ENCODE measurements at regions of chr5 and their contacts with region 1.

Region 1: GRCh38 chr5:147558826-147559225 is 49.0 kb upstream of the DPYSL3 start:
- DNase-seq: peak; percentile 86
- H3K4me3 ChIP-seq: no peak overlapping the region
- H3K27ac ChIP-seq: no peak overlapping the region
- H3K4me1 ChIP-seq: peaks cover 3% of the 10 kb centered on the region
- H3K27me3 ChIP-seq: peaks cover 0 to 1% of the 10 kb centered on the region in 2 experiments
- CTCF ChIP-seq: peak; percentile 74 to 85
- POLR2A ChIP-seq: no peak

Region 2: DNA sequence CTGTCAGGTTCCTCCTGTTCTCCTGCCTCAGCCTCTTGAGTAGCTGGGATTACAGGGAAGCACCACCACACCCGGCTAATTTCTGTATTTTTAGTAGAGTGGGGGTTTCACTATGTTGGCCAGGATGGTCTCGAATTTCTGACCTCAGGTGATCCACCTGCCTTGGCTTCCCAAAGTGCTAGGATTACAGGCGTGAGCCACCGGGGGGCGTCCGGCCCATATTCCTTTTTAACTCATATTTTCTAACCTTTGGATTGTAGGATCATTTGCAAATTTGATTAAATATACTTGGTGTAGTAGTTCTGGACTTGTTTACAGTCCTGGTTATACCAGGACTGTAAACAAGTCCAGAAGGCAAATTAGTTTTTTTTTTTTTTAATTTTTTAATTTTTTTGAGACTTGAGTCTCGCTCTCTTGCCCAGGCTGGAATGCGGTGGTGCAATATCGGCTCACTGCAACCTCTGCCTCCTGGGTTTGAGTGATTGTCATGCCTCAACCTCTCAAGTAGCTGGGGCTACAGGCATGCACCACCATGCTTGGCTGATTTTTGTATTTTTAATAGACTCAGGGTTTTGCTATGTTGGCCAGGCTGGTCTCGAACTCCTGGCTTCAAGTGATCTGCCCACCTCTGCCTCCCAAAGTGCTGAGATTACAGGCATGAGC is 1107.3 kb before region 1 on chr5:
- CTCF ChIA-PET with region 1: no interaction called
- POLR2A ChIA-PET with region 1: no interaction called
- dilution Hi-C with region 1: no loop called
- intact Hi-C with region 1: no loop called
- DNase-seq: no peak
- H3K4me3 ChIP-seq: no peak overlapping the region
- H3K27ac ChIP-seq: no peak overlapping the region
- H3K4me1 ChIP-seq: peaks cover 16% of the 10 kb centered on the region
- H3K27me3 ChIP-seq: no peaks in the 10 kb centered on the region
- CTCF ChIP-seq: peak; percentile 12 to 23
- POLR2A ChIP-seq: no peak

Region 3: DNA sequence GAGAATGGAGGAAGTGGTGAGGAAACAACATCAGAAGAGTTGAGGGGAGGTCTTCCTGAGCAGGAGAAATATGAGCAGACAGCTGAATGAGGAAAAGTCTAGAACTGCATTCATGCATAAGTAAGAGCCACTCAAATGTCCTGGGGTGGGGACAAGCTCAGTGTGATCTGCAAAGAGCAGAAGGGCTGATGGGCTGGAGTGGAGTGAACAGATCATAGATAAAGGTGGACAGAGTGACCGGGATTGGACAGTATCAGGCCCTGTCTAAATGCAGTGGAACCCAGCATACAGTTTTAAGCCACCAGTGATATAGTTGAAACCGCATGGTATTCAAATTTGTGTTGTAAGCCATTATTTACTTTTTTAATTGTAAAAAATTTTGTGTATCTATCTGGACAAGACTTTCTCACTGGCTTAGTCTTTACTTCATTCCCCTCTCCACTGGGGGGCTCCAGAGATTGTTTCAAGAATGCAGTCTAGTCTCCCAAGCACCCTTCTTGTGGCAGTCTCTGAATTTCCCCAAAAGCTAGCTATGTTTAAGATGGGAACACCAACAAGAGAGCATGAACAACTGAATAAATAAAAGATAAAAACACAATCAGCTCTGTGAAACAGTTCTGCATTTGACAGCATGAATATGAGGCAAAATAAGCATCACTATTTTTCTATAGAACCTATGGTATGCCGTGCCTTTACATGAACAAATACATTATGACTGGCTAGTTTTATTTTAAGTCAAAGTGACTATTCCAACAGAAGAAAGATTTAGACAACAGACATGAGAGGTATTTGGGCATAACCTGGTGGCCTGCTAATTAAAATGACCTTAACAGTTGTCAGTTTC is 334.7 kb before region 1 on chr5:
- CTCF ChIA-PET with region 1: interaction called, 18 read pairs
- POLR2A ChIA-PET with region 1: no interaction called
- dilution Hi-C with region 1: no loop called
- intact Hi-C with region 1: loop called (anchors 1 kb)
- DNase-seq: peak; percentile 60
- H3K4me3 ChIP-seq: no peak overlapping the region
- H3K27ac ChIP-seq: no peak overlapping the region
- H3K4me1 ChIP-seq: no peaks in the 10 kb centered on the region
- H3K27me3 ChIP-seq: peaks cover 4% of the 10 kb centered on the region in 2 experiments
- CTCF ChIP-seq: peak; percentile 44 to 64
- POLR2A ChIP-seq: no peak

Region 4: DNA sequence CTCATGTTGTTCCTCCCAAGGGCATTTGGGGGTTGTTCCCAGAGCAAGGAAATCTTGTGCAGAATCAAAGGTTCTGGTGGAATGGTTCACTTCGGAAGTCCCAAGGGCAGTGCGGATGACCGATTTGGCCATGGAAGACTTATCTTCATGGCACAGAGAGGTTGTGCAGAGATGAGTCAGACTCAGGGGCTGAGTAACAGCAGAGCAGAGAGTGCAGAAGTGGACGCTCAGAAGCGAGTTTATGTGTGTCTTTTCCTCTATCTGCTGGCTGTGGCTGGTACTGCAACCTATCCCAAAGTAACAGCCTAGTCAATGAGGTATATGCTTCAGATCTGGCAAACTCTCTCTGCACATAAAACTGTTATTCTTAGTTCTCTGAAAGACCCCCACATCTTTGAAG is 167.0 kb before region 1 on chr5:
- CTCF ChIA-PET with region 1: interaction called, 21 read pairs
- POLR2A ChIA-PET with region 1: no interaction called
- dilution Hi-C with region 1: no loop called
- intact Hi-C with region 1: loop called (anchors 1 kb)
- DNase-seq: peak; percentile 80
- H3K4me3 ChIP-seq: no peak overlapping the region
- H3K27ac ChIP-seq: no peak overlapping the region
- H3K4me1 ChIP-seq: peaks cover 12% of the 10 kb centered on the region
- H3K27me3 ChIP-seq: no peaks in the 10 kb centered on the region
- CTCF ChIP-seq: peak; percentile 63 to 73
- POLR2A ChIP-seq: no peak

Region 5: GRCh38 chr5:147448766-147449165 is 110.1 kb before region 1 on chr5:
- CTCF ChIA-PET with region 1: interaction called, 136 read pairs
- POLR2A ChIA-PET with region 1: interaction called, 3 read pairs
- dilution Hi-C with region 1: no loop called
- intact Hi-C with region 1: no loop called
- DNase-seq: no peak
- H3K4me3 ChIP-seq: no peak overlapping the region
- H3K27ac ChIP-seq: no peak overlapping the region
- H3K4me1 ChIP-seq: no peaks in the 10 kb centered on the region
- H3K27me3 ChIP-seq: no peaks in the 10 kb centered on the region
- CTCF ChIP-seq: no peak
- POLR2A ChIP-seq: no peak

Region 6: GRCh38 chr5:147464211-147464610 is 94.6 kb before region 1 on chr5:
- CTCF ChIA-PET with region 1: interaction called, 131 read pairs
- POLR2A ChIA-PET with region 1: no interaction called
- dilution Hi-C with region 1: no loop called
- intact Hi-C with region 1: loop called (anchors 1 kb)
- DNase-seq: peak; percentile 81
- H3K4me3 ChIP-seq: no peak overlapping the region
- H3K27ac ChIP-seq: no peak overlapping the region
- H3K4me1 ChIP-seq: peaks cover 10% of the 10 kb centered on the region
- H3K27me3 ChIP-seq: no peaks in the 10 kb centered on the region
- CTCF ChIP-seq: peak; percentile 55 to 61
- POLR2A ChIP-seq: no peak

Region 7: DNA sequence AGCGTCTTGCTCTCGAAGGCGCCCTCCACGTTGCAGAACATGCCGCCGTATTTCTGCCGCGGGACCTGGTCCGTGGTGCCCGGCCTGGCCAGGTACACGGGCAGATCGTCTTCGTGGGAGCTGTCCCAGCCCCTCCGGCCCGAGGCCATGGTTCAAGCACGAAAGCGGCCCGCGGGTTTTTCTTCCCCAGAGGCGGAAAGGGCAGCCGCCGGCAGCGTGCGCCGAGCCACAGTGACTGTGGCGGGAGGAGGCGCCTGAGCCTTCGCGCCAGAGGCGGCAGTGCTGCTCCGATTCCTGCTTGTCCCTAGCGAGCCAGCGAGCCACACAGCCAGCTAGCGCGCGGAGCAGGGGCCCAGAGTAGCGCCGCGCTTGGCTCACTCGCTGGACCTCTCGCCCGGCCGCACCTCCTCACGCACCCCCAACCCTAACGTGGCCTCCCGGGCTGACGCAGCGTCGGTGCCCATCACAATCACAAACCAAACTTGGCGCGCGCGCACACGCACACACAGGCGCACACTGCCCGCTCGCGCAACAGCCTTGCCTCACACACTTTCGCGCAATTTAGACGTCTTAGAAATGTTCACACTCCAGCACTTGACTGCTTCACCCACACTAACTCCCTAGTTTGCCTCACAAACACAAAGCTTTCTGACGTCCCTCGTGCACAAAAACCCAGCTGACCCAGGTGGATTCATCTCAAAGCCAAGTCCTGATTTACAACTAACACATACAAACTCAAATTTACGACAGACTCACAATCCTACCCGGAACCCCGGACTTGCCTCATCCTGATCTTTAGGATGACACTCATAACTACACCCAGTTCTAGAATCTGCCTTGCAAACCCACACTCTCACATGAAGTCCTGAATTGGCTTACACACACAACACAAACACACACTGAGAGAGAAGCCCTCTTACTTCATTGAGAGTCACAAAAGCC is 48.8 kb before region 1 on chr5 and contains the start of gene DPYSL3:
- CTCF ChIA-PET with region 1: interaction called, 39 read pairs
- POLR2A ChIA-PET with region 1: no interaction called
- dilution Hi-C with region 1: no loop called
- intact Hi-C with region 1: loop called (anchors 1 kb)
- DNase-seq: peak; percentile 90
- H3K4me3 ChIP-seq: peak within 1 kb of the TSS; percentile 46 to 85 (median 79)
- H3K27ac ChIP-seq: peak within 1 kb of the TSS; percentile 67
- H3K4me1 ChIP-seq: peaks cover 26% of the 10 kb centered on the region
- H3K27me3 ChIP-seq: no peaks in the 10 kb centered on the region
- CTCF ChIP-seq: peak; percentile 25 to 55
- POLR2A ChIP-seq: peak; percentile 60
- total RNA-seq, gene DPYSL3: 142 and 146 TPM in 2 replicates

Region 8: GRCh38 chr5:147539053-147539452 is 19.8 kb before region 1 on chr5:
- CTCF ChIA-PET with region 1: interaction called, 12 read pairs
- POLR2A ChIA-PET with region 1: no interaction called
- dilution Hi-C with region 1: no loop called
- intact Hi-C with region 1: loop called (anchors 2 kb)
- DNase-seq: peak; percentile 53
- H3K4me3 ChIP-seq: no peak overlapping the region
- H3K27ac ChIP-seq: no peak overlapping the region
- H3K4me1 ChIP-seq: peaks cover 33% of the 10 kb centered on the region
- H3K27me3 ChIP-seq: no peaks in the 10 kb centered on the region
- CTCF ChIP-seq: no peak
- POLR2A ChIP-seq: no peak

Measured in endothelial cell of umbilical vein (primary cell).